ENCODE measurements at regions of chr6 and their contacts with region 1.

Region 1: GRCh38 chr6:157068691-157069324 is 254.5 kb downstream of the TMEM242 start:
- DNase-seq: no peak
- ATAC-seq: peak; percentile 89
- H3K4me3 Mint-ChIP-seq: peak overlapping the region; percentile 29
- H3K27ac Mint-ChIP-seq: peak overlapping the region; percentile 64
- H3K4me1 Mint-ChIP-seq: peaks cover 78% of the 10 kb centered on the region
- H3K27me3 Mint-ChIP-seq: no peaks in the 10 kb centered on the region
- CTCF ChIP-seq: no peak

Region 2: GRCh38 chr6:157054531-157054979 is 14.3 kb before region 1 on chr6:
- CTCF ChIA-PET with region 1: interaction called, 3 read pairs
- POLR2A ChIA-PET with region 1: interaction called, 6 read pairs
- intact Hi-C with region 1: loop called (anchors 2 kb)
- DNase-seq: no peak
- ATAC-seq: peak; percentile 91
- H3K4me3 Mint-ChIP-seq: peak overlapping the region; percentile 44
- H3K27ac Mint-ChIP-seq: peak overlapping the region; percentile 83
- H3K4me1 Mint-ChIP-seq: peaks cover 52% of the 10 kb centered on the region
- H3K27me3 Mint-ChIP-seq: no peaks in the 10 kb centered on the region
- CTCF ChIP-seq: no peak

Region 3: GRCh38 chr6:157079771-157080170 is 11.0 kb after region 1 on chr6:
- CTCF ChIA-PET with region 1: no interaction called
- POLR2A ChIA-PET with region 1: interaction called, 7 read pairs
- intact Hi-C with region 1: loop called (anchors 1 kb)
- DNase-seq: no peak
- ATAC-seq: peak; percentile 15
- H3K4me3 Mint-ChIP-seq: no peak overlapping the region
- H3K27ac Mint-ChIP-seq: peak overlapping the region; percentile 37
- H3K4me1 Mint-ChIP-seq: peaks cover 82% of the 10 kb centered on the region
- H3K27me3 Mint-ChIP-seq: no peaks in the 10 kb centered on the region
- CTCF ChIP-seq: no peak

Region 4: DNA sequence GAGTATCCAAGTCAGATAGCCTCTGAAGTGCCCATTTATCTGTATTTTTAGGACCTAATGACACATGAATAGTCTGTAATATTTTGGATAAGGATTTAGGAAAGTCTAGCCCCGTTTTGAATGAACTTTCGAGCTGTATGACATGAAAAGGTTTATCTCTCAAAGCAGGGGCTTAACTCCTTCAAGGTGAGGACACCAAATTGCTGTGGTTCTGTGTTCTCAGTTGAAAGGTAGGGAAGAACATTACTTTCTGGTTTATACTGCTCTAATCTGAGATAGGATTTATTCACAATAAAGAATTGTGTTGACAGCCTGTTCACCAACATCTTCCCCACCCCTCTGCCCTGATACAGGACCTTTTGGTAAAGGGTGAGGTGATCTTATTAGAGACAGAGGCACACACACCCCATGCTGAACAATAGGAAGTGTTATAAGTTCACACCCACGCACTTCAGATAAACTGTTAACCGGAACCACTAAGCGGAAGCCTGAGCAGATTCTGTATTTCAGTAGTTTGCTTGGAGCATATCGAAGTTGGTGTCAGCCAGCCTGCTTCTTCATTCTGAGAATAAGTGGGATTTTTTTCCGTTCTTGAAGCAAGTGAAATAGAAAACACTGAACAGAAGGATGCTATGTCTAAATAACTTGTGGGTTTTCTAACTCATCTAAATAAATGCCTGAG is 31.2 kb after region 1 on chr6:
- CTCF ChIA-PET with region 1: no interaction called
- POLR2A ChIA-PET with region 1: no interaction called
- intact Hi-C with region 1: loop called (anchors 1 kb)
- DNase-seq: no peak
- ATAC-seq: peak; percentile 94
- H3K4me3 Mint-ChIP-seq: peak overlapping the region; percentile 44
- H3K27ac Mint-ChIP-seq: peak overlapping the region; percentile 78
- H3K4me1 Mint-ChIP-seq: peaks cover 60% of the 10 kb centered on the region
- H3K27me3 Mint-ChIP-seq: no peaks in the 10 kb centered on the region
- CTCF ChIP-seq: no peak

Region 5: GRCh38 chr6:157434349-157435033 is 365.7 kb after region 1 on chr6:
- CTCF ChIA-PET with region 1: no interaction called
- POLR2A ChIA-PET with region 1: no interaction called
- intact Hi-C with region 1: no loop called
- DNase-seq: no peak
- ATAC-seq: no peak
- H3K4me3 Mint-ChIP-seq: no peak overlapping the region
- H3K27ac Mint-ChIP-seq: no peak overlapping the region
- H3K4me1 Mint-ChIP-seq: peaks cover 14% of the 10 kb centered on the region
- H3K27me3 Mint-ChIP-seq: no peaks in the 10 kb centered on the region
- CTCF ChIP-seq: no peak

Measured in activated B cell treated with CpG ODN at 0.5 μM for 24 hours (primary cell).